Posterior vena cava (tissue), 2 donors: ENCODE measurements at regions of chr6 and their contacts with region 1.

Region 1: DNA sequence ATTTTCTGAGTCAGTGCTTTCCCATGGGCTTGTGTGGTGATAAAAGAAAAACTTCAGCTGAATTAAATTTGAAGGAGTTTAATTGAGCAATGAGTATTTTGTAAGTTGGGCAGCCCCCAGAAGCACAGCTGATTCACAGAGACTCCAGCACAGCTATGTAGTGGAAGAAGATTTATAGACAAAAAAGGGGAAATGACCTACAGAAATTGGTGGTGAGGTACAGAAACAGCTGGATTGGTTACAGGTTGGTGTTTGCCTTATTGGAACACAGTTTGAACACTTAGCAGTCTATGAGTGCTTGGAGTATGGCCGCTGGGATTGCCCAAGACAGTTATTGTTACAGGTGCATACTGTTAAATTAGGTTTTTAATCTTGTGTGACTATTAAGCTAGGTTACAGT is 96.9 kb upstream of the PTPRK start:
- DNase-seq: no peak

Region 2: GRCh38 chr6:127980996-127981395 is 636.3 kb before region 1 on chr6:
- intact Hi-C with region 1: no loop called
- DNase-seq: no peak

Region 3: DNA sequence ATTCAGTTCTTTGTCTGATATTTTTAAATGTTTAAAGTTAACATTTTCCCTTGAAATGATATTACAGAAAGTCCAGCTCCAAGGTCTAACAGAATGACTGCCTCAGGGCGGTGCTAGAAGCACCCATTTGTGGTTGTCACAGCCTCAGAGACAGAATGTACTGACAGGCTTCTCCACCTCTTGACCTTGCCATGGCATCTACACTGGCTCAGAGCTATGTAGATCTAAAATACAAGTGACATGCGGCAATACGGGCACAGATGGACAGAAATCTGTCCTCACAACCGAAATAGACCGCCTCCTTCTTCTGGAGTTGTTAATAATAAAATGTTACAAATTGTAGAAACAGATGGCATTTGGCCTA is 549.2 kb before region 1 on chr6:
- intact Hi-C with region 1: no loop called
- DNase-seq: no peak

Region 4: GRCh38 chr6:128532827-128533226 is 84.5 kb before region 1 on chr6:
- intact Hi-C with region 1: no loop called
- DNase-seq: no peak

Region 5: DNA sequence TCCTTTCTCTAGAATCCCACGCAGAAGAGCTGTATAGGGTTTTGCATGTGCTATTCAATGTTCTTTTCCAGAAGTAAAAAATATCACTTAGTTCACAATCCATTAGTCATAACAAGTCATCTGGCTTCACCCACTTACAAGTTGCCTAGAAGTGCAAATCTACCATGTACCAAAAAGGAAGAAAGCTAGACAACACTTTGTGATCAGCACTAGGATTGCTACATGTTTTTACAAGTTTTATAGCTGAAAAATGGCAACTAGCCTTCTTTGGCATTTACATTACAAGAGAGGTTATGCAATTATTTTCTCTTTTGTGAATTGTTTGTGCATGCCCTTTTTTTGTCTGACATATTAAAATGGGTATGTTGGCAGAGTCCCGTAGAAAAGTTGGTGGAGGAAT is 11.3 kb before region 1 on chr6:
- intact Hi-C with region 1: loop called in 1 of 2 experiments (anchors 1 kb)
- DNase-seq: no peak

Region 6: GRCh38 chr6:128641701-128642100 is 24.4 kb after region 1 on chr6:
- intact Hi-C with region 1: loop called in 1 of 2 experiments (anchors 2 kb)
- DNase-seq: no peak